ENCODE measurements at regions of chr7 and their contacts with region 1.

Region 1: GRCh38 chr7:64794171-64794844 is at the start of gene ZNF138:
- DNase-seq: peak; percentile 88 to 96 (median 94)
- ATAC-seq: peak; percentile 98
- H3K4me3 ChIP-seq: peak within 1 kb of the TSS; percentile 75 to 79
- H3K4me3 Mint-ChIP-seq: peak within 1 kb of the TSS; percentile 99
- H3K27ac ChIP-seq: peak within 1 kb of the TSS; percentile 87 to 90
- H3K27ac Mint-ChIP-seq: peak within 1 kb of the TSS; percentile 98
- H3K4me1 ChIP-seq: peaks cover 21% of the 10 kb centered on the region
- H3K4me1 Mint-ChIP-seq: peaks cover 35% of the 10 kb centered on the region
- H3K27me3 ChIP-seq: no peaks in the 10 kb centered on the region
- H3K27me3 Mint-ChIP-seq: no peaks in the 10 kb centered on the region
- CTCF ChIP-seq: no peak
- total RNA-seq, gene ZNF138: 4.9 to 5.3 TPM

Region 2: GRCh38 chr7:63925623-63926460 is 868.5 kb before region 1 on chr7:
- CTCF ChIA-PET with region 1: no interaction called
- POLR2A ChIA-PET with region 1: no interaction called
- intact Hi-C with region 1: loop called (anchors 5 to 10 kb)
- DNase-seq: peak; percentile 80 to 95 (median 90)
- ATAC-seq: peak; percentile 95
- H3K4me3 ChIP-seq: peak overlapping the region; percentile 76 to 93
- H3K4me3 Mint-ChIP-seq: peak overlapping the region; percentile 94
- H3K27ac ChIP-seq: peak overlapping the region; percentile 84 to 88
- H3K27ac Mint-ChIP-seq: peak overlapping the region; percentile 92
- H3K4me1 ChIP-seq: no peaks in the 10 kb centered on the region
- H3K4me1 Mint-ChIP-seq: peaks cover 13% of the 10 kb centered on the region
- H3K27me3 ChIP-seq: no peaks in the 10 kb centered on the region
- H3K27me3 Mint-ChIP-seq: no peaks in the 10 kb centered on the region
- CTCF ChIP-seq: no peak

Region 3: DNA sequence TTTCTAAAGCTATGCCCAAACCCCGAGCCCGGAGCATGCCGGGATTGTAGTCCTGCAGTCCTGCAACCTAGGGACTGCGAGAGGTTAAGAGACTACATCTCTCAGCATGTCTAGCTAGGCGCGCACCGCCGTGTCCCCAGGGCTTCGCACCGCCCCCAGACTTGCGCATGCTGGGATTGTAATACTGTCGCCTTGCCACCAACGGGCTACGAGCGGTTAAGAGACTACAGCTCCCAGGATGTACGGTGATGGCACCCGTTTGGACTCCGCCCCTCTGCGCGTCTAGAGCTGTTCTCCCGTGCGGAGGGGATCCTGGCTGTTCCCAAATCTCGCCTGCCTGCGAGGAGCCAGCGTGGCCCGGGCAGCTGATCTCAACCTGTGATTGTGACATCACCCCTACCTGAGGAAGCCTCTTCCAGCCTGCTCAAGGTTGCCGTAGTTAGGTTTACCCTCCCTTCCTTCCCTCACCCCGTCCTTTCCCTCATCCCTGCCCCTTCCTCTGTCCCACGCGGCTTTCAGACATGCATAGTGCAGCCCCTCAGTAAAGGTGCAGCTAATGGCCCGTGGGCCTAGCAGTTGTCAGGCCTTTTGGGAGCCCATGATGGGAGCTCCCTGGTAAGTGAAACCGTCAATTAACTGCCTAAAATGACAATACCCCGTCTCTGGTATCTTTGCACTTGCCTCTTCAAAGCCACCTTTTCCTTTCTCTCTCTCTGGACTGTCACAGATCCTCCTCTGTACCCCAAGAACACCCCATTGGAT is 486.9 kb before region 1 on chr7:
- CTCF ChIA-PET with region 1: no interaction called
- POLR2A ChIA-PET with region 1: interaction called, 10 read pairs
- intact Hi-C with region 1: loop called in 1 of 2 experiments (anchors 1 kb)
- DNase-seq: peak; percentile 88 to 97 (median 94)
- ATAC-seq: peak; percentile 98
- H3K4me3 ChIP-seq: peak overlapping the region; percentile 71 to 80
- H3K4me3 Mint-ChIP-seq: peak overlapping the region; percentile 95
- H3K27ac ChIP-seq: peak overlapping the region; percentile 77 to 91
- H3K27ac Mint-ChIP-seq: peak overlapping the region; percentile 99
- H3K4me1 ChIP-seq: peaks cover 14% of the 10 kb centered on the region
- H3K4me1 Mint-ChIP-seq: peaks cover 14% of the 10 kb centered on the region
- H3K27me3 ChIP-seq: no peaks in the 10 kb centered on the region
- H3K27me3 Mint-ChIP-seq: no peaks in the 10 kb centered on the region
- CTCF ChIP-seq: no peak

Region 4: DNA sequence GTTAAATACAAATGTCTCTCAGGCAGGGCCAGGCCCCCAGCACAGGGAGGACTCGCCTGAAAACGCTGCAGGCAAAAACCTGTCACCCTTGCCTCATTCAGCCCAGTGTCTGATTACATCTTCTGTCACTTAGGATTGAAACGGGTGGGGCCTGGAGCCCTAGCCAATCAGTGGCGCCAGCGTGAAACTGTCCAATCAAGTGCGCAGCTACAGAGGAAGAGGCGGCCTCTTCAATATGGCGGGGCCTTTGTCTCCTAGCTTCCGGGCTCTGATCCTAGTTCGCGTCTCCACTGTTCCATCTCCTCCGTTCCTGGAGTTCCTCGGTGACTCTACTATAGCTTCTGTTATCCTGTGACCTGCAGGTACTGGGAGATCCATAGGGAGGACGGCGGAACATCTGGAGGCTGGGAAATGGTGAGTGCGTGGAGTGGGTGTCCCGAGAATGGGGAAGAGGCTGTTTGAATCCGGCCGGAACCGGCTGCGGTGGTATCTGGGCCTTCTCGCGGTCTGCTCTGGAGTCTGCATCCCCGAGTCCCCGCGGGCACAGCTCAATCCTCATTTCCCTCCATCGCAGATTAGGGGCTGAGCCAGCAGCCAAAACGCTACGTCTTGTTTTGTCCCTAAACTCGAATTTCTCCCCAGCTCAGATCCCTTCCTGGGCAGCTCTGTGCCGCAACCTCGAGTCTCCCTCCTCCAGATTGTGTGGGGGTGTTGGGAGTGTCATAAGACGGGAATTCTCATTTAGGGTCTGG is 480.4 kb before region 1 on chr7 and contains the start of gene ZNF736:
- CTCF ChIA-PET with region 1: no interaction called
- POLR2A ChIA-PET with region 1: interaction called, 3 read pairs
- intact Hi-C with region 1: loop called (anchors 2 kb)
- DNase-seq: peak; percentile 71 to 94 (median 86)
- ATAC-seq: peak; percentile 100
- H3K4me3 ChIP-seq: peak within 1 kb of the TSS; percentile 66 to 98
- H3K4me3 Mint-ChIP-seq: peak within 1 kb of the TSS; percentile 99
- H3K27ac ChIP-seq: peak within 1 kb of the TSS; percentile 76 to 88
- H3K27ac Mint-ChIP-seq: peak within 1 kb of the TSS; percentile 98
- H3K4me1 ChIP-seq: peaks cover 25% of the 10 kb centered on the region
- H3K4me1 Mint-ChIP-seq: peaks cover 32% of the 10 kb centered on the region
- H3K27me3 ChIP-seq: no peaks in the 10 kb centered on the region
- H3K27me3 Mint-ChIP-seq: no peaks in the 10 kb centered on the region
- CTCF ChIP-seq: no peak
- total RNA-seq, gene ZNF736: 23.4 to 26.6 TPM

Region 5: DNA sequence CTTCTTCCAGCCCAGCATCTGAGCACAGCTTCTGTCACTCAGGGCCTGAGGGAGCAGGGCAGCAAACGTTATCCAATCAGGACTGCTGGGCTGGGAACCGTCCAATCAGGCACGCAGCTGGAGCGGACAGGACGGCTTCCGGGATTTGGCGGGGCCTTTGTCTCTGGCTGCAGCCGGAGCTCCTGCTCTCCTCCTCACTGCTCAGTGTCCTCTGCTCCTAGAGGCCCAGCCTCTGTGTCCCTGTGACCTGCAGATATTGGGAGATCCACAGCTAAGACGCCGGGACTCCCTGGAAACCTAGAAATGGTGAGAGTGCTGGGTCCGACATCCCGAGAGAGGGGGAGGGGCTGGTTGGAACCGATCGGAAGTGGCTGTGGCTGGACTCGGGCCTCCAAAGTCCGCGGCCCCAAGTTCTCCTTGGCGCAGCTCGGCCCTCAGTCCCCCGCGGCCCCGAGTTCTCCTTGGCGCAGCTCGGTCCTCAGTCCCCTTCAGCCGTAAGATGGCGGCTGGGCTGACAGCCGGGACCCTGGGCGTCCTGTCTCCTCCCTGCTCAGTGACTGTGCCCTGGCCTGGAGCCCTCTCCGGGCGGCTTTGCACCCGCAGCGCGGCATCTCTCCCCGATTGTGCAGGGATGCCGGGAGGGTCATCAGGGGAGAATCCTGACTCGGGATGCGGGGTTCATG is 128.2 kb before region 1 on chr7 and contains the start of gene ZNF107:
- CTCF ChIA-PET with region 1: interaction called, 7 read pairs
- POLR2A ChIA-PET with region 1: interaction called, 12 read pairs
- intact Hi-C with region 1: loop called (anchors 1 to 2 kb)
- DNase-seq: peak; percentile 73 to 94 (median 86)
- ATAC-seq: peak; percentile 95
- H3K4me3 ChIP-seq: peak within 1 kb of the TSS; percentile 93 to 95
- H3K4me3 Mint-ChIP-seq: peak within 1 kb of the TSS; percentile 96
- H3K27ac ChIP-seq: peak within 1 kb of the TSS; percentile 92 to 93
- H3K27ac Mint-ChIP-seq: peak within 1 kb of the TSS; percentile 96
- H3K4me1 ChIP-seq: peaks cover 14% of the 10 kb centered on the region
- H3K4me1 Mint-ChIP-seq: peaks cover 64% of the 10 kb centered on the region
- H3K27me3 ChIP-seq: no peaks in the 10 kb centered on the region
- H3K27me3 Mint-ChIP-seq: no peaks in the 10 kb centered on the region
- CTCF ChIP-seq: no peak
- total RNA-seq, gene ZNF107: 14.0 to 14.7 TPM

Region 6: DNA sequence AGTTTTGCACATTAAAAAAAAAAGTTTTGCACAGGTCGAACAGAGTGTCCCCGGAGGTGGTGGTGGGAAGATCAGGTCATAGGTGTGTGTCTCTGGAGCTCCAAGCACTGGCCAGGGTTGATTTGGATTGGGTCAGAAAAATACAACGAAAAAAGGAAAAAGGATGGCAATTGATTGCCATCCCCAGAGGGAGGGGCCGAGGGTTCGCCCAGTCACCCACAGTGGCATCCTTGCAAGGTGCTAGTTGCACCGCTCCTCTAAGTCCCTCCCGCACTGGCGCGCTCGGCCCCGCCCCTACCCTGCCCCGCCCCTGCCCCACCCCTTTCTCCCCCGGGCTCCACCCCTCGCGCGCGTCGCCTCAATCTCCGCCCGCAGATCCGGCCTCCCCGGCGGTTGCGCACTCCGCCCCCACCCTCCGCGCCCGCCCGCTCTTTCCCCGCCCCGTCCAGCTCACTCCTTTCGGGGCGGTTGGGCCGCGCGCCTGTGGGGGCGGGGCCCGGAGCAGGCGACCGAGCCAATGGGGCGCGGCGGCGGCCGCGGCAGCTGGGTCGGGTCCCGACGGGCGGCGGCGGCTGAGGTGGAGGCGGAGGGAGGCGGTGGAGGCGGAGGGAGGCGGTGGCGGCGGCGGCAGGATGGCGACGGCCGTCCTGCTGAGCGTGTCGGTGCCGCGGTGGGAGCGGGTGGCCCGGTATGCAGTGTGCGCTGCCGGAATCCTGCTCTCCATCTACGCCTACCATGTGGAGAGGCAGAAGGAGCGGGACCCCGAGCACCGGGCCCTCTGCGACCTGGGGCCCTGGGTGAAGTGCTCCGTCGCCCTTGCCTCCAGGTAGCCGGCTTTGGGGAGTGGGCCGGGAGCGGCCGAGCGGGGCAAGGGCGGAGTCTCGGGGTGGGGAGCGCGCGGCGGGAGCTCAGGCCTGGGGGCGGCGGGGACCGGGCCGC is 243.7 kb after region 1 on chr7:
- CTCF ChIA-PET with region 1: no interaction called
- POLR2A ChIA-PET with region 1: no interaction called
- intact Hi-C with region 1: loop called (anchors 1 to 2 kb)
- DNase-seq: peak; percentile 87 to 97 (median 94)
- ATAC-seq: peak; percentile 89
- H3K4me3 ChIP-seq: peak overlapping the region; percentile 52 to 69
- H3K4me3 Mint-ChIP-seq: peak overlapping the region; percentile 79
- H3K27ac ChIP-seq: peak overlapping the region; percentile 62 to 74
- H3K27ac Mint-ChIP-seq: peak overlapping the region; percentile 80
- H3K4me1 ChIP-seq: peaks cover 11% of the 10 kb centered on the region
- H3K4me1 Mint-ChIP-seq: peaks cover 14% of the 10 kb centered on the region
- H3K27me3 ChIP-seq: no peaks in the 10 kb centered on the region
- H3K27me3 Mint-ChIP-seq: no peaks in the 10 kb centered on the region
- CTCF ChIP-seq: peak; percentile 16

Region 7: GRCh38 chr7:65809982-65810288 is 1015.6 kb after region 1 on chr7:
- CTCF ChIA-PET with region 1: no interaction called
- POLR2A ChIA-PET with region 1: no interaction called
- intact Hi-C with region 1: no loop called
- DNase-seq: no peak
- ATAC-seq: no peak
- H3K4me3 ChIP-seq: no peak overlapping the region
- H3K4me3 Mint-ChIP-seq: no peak overlapping the region
- H3K27ac ChIP-seq: no peak overlapping the region
- H3K27ac Mint-ChIP-seq: no peak overlapping the region
- H3K4me1 ChIP-seq: no peaks in the 10 kb centered on the region
- H3K4me1 Mint-ChIP-seq: no peaks in the 10 kb centered on the region
- H3K27me3 ChIP-seq: no peaks in the 10 kb centered on the region
- H3K27me3 Mint-ChIP-seq: no peaks in the 10 kb centered on the region
- CTCF ChIP-seq: no peak